Calu3 (cell line): ENCODE measurements at regions of chr3 and their contacts with region 1.

Region 1: DNA sequence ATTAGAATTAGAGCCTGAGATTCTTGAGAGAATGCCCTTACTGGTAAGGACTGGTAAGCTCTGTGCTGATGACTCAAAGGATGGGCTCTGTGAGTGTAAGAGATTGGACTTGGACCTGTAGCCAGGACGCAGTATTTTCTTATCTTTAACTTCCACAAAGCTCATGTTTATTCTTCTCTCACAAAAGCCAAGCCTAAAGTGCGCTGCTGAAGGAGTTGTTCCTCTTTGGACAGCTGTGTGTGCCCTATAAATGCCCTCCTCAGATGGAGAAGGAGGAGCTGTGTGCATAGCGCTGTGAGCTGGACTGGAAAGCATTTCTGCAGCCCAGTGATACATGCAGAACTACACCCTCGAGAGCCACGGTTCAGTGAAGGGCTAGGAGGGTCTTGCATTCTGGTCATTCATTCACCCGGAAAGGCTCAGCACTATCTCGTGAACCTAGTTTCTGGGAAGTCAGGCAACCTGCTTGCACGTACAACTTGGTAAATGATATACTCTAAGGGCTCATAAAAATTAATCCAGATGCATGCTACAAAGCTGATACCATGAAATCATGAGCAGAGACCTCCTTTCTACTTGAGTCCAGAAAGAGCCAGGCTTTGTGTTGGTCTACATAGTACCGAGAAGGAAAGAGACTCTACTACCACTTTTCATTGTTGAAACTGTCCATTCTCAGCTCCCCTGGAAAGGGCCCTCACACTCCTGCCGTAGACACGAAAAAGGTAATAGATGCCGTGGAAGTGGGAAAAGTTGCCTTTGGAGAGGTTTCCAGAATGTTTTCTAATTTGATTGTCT is 103.0 kb upstream of the TBL1XR1 start:
- DNase-seq: peak; percentile 72
- H3K4me3 Mint-ChIP-seq: peak overlapping the region; percentile 50
- H3K27ac Mint-ChIP-seq: peak overlapping the region; percentile 86
- H3K4me1 Mint-ChIP-seq: peaks cover 39% of the 10 kb centered on the region
- H3K27me3 Mint-ChIP-seq: no peaks in the 10 kb centered on the region
- CTCF ChIP-seq: no peak

Region 2: GRCh38 chr3:177211503-177212277 is 88.5 kb before region 1 on chr3:
- CTCF ChIA-PET with region 1: interaction called, 3 read pairs
- intact Hi-C with region 1: loop called (anchors 2 kb)
- DNase-seq: peak; percentile 85
- H3K4me3 Mint-ChIP-seq: peak overlapping the region; percentile 30
- H3K27ac Mint-ChIP-seq: peak overlapping the region; percentile 78
- H3K4me1 Mint-ChIP-seq: peaks cover 38% of the 10 kb centered on the region
- H3K27me3 Mint-ChIP-seq: no peaks in the 10 kb centered on the region
- CTCF ChIP-seq: no peak

Region 3: DNA sequence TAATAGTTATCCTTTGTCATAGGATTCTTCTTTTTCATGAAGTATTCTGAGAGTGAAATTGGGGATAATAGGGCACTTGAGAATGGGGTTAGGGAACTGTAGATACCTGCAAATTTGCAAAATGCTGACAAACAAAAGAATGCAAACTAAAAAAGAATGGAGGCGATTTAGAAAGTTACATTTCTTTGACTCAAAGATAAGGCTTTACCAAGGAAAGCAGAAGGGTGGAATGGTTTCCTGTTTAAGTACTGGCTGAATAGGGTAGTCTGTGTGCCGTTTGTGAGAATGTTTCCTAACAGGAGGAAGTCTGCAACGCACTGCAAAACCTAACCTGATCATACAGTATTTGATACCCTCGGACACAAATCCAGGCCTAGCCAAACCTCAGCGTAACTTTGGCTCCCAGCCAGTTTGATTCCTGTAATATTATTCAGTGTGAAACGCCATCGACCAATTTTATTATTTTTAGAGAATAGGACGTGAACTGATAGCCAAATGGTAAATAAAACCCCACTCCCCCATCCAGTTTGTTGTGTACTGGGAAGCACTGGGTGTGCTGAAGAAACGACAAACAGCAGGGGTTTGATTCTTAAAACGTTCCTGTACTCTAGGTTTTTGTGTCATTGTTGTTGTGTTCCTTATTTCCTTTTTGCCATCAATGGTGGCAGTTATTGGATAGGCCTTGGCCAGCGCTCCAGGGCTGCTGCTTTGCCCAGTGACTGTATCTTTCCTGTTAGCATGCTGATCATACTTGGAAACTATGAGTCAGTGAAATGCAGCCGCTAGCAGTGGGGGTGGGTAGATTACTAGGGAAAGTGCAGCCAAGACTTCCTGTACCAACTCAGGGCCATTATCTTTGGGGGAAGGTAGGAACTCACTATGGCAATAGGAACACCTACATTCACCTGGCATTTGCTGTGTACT is 45.1 kb after region 1 on chr3:
- CTCF ChIA-PET with region 1: interaction called, 10 read pairs
- intact Hi-C with region 1: loop called (anchors 2 kb)
- DNase-seq: peak; percentile 93
- H3K4me3 Mint-ChIP-seq: peak overlapping the region; percentile 63
- H3K27ac Mint-ChIP-seq: peak overlapping the region; percentile 100
- H3K4me1 Mint-ChIP-seq: peaks cover 74% of the 10 kb centered on the region
- H3K27me3 Mint-ChIP-seq: no peaks in the 10 kb centered on the region
- CTCF ChIP-seq: no peak

Region 4: GRCh38 chr3:177478170-177478860 is 178.1 kb after region 1 on chr3:
- CTCF ChIA-PET with region 1: no interaction called
- intact Hi-C with region 1: loop called (anchors 2 kb)
- DNase-seq: peak; percentile 77
- H3K4me3 Mint-ChIP-seq: peak overlapping the region; percentile 16
- H3K27ac Mint-ChIP-seq: peak overlapping the region; percentile 4
- H3K4me1 Mint-ChIP-seq: peaks cover 39% of the 10 kb centered on the region
- H3K27me3 Mint-ChIP-seq: no peaks in the 10 kb centered on the region
- CTCF ChIP-seq: no peak